ENCODE measurements at regions of chr12 and their contacts with region 1.

Region 1: DNA sequence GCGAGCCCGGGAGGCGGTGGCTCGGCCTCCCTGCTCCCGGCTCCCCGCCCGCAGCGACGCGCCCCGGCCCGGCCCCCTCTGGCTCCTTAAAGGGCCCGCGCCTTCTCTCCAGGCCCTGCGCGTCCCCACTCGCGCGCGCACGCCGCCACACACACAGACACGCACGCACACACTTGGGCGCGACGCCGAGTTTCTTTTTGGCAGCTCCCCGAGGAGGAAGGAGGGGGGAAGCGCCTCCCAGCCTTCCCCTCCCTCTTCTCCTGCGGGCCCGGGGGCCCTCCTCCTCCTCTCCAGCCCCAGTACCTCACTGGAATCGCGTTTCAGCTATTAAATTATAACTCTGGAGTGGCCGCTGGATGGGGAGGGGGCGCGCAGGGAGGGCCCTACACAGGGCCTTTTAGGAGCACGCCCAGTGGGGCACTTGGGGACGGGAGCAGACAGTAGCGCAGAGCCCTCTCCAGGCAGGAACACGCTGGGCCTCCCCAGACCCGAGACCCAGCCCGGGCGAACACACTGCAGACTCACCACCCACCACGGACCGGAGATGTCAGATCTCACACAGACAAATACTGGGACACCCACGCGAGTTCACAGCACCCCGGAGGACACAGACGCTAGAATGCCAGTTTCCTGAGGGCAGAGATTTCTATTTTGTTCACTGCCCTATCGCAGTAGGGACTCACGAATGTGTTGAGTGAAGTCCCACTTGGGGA is 405 bp upstream of the NCOR2 start:
- DNase-seq: peak; percentile 79
- H3K4me3 ChIP-seq: peak overlapping the region; percentile 8 to 97 (median 39)
- H3K27ac ChIP-seq: peak overlapping the region; percentile 31
- H3K4me1 ChIP-seq: peaks cover 27% of the 10 kb centered on the region
- H3K27me3 ChIP-seq: no peaks in the 10 kb centered on the region
- CTCF ChIP-seq: no peak

Region 2: GRCh38 chr12:124422570-124423523 is 145.0 kb before region 1 on chr12:
- CTCF ChIA-PET with region 1: no interaction called
- dilution Hi-C with region 1: no loop called
- in situ Hi-C with region 1: no loop called
- intact Hi-C with region 1: loop called (anchors 5 kb)
- DNase-seq: peak; percentile 76
- H3K4me3 ChIP-seq: no peak overlapping the region
- H3K27ac ChIP-seq: peak overlapping the region; percentile 47
- H3K4me1 ChIP-seq: peaks cover 23% of the 10 kb centered on the region
- H3K27me3 ChIP-seq: no peaks in the 10 kb centered on the region
- CTCF ChIP-seq: peak in 1 of 2 donors; percentile 14

Region 3: GRCh38 chr12:124620751-124621660 is 53.2 kb after region 1 on chr12:
- CTCF ChIA-PET with region 1: no interaction called
- dilution Hi-C with region 1: no loop called
- in situ Hi-C with region 1: no loop called
- intact Hi-C with region 1: loop called (anchors 5 kb)
- DNase-seq: peak; percentile 94
- H3K4me3 ChIP-seq: no peak overlapping the region
- H3K27ac ChIP-seq: peak overlapping the region; percentile 51
- H3K4me1 ChIP-seq: peaks cover 46% of the 10 kb centered on the region
- H3K27me3 ChIP-seq: no peaks in the 10 kb centered on the region
- CTCF ChIP-seq: no peak

Region 4: DNA sequence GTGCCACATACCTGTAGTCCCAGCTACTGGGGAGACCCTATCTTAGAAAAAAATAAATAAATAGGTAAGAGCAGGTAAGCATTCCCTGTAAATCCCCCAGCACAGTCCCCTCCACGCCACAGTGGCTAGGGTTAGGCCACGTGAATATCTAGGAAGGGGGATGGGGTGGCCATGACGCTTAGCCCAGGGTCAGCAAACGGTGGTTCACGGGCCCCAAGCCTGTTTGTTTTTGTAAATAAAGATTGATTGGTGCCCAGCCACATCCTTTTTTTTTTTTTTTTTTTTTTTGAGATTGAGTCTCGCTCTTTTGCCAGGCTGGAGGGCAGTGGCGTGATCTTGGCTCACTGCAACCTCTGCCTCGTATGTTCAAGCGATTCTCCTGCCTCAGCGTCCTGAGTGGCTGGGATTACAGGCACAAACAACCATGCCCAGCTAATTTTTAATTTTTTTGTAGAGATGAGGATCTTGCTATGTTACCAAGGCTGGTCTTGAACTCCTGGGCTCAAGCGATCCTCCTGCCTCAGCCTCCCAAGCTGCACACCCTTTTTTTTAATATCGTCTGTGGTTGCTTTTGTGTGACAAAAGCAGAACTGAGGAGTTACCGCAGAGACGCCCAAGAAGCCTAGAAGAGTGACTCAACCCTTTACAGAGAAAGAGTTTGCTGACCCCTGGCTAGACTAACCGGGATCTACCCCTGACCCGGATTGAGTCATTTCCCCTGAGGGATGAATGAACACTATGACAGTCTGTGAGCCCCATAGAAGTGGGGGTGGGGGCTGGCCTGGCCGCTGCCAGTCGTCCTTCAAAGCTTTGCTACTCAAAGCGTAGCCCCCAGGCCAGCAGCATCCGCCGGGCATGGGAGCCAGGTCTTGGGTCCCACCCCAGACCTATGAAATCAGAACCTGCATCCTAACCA is 113.3 kb after region 1 on chr12:
- CTCF ChIA-PET with region 1: no interaction called
- dilution Hi-C with region 1: no loop called
- in situ Hi-C with region 1: no loop called
- intact Hi-C with region 1: loop called (anchors 1 kb)
- DNase-seq: peak; percentile 97
- H3K4me3 ChIP-seq: no peak overlapping the region
- H3K27ac ChIP-seq: peak overlapping the region; percentile 42
- H3K4me1 ChIP-seq: peaks cover 43% of the 10 kb centered on the region
- H3K27me3 ChIP-seq: no peaks in the 10 kb centered on the region
- CTCF ChIP-seq: peak; percentile 34 to 61

Region 5: GRCh38 chr12:124745891-124746570 is 178.2 kb after region 1 on chr12:
- CTCF ChIA-PET with region 1: no interaction called
- dilution Hi-C with region 1: no loop called
- in situ Hi-C with region 1: loop called in 1 of 2 experiments (anchors 10 kb)
- intact Hi-C with region 1: loop called (anchors 1 kb)
- DNase-seq: peak; percentile 77
- H3K4me3 ChIP-seq: no peak overlapping the region
- H3K27ac ChIP-seq: no peak overlapping the region
- H3K4me1 ChIP-seq: peaks cover 23% of the 10 kb centered on the region
- H3K27me3 ChIP-seq: no peaks in the 10 kb centered on the region
- CTCF ChIP-seq: no peak